B cell (primary cell): ENCODE measurements at regions of chr3 and their contacts with region 1.

Region 1: DNA sequence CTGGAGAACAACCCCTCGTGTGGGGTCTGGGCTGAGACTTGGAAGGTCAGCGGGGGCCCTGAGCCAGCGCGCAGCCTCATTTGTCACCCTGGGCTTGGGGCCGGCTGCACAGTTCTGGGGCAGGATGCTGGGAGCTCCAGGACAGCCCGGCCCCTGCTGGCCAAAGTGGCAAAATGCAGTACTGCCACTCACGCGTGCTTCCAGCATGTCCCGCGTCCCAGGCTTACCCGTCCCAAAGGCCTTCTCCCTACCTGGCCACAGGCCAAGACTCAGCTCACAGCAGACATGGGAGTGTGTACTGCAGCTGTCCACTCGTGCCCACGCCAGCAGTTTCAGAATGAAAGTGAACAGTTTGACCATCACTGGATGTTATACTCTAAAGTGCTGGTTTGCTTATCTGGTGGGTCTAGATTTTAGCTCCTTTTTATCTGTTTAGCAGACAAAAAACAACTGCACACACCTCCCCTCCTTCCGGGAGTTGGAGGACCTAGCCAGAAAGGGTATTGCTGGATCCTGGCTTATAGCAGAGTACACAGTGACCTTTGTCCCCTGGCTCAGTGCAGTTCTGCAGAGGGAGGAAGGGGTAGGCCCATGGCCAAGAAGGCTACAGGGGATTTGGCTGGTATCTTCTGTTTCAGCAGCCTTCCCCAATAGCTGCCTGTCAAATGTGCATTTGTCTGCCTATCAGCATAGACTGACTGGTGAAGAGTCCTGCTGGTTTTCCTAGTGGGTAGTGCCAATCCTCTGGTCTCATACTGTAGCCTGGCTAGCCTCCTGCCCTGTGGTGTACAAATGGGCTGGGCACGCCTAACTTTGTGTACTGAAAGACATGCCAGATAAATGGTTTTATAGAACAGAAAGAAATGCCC is 23.2 kb upstream of the IP6K2 start:
- DNase-seq: peak; percentile 67
- ATAC-seq: peak; percentile 90
- H3K4me3 ChIP-seq: no peak overlapping the region
- H3K4me3 Mint-ChIP-seq: no peak overlapping the region
- H3K27ac ChIP-seq: no peak overlapping the region
- H3K27ac Mint-ChIP-seq: no peak overlapping the region
- H3K4me1 ChIP-seq: peaks cover 0 to 8% of the 10 kb centered on the region in 2 donors
- H3K4me1 Mint-ChIP-seq: peaks cover 13% of the 10 kb centered on the region
- H3K27me3 ChIP-seq: no peaks in the 10 kb centered on the region
- H3K27me3 Mint-ChIP-seq: no peaks in the 10 kb centered on the region
- CTCF ChIP-seq: peak; percentile 77

Region 2: GRCh38 chr3:48446425-48447193 is 293.6 kb before region 1 on chr3 and contains the start of gene ATRIP:
- CTCF ChIA-PET with region 1: no interaction called
- POLR2A ChIA-PET with region 1: no interaction called
- intact Hi-C with region 1: no loop called
- DNase-seq: peak; percentile 89
- ATAC-seq: peak; percentile 99
- H3K4me3 ChIP-seq: peak within 1 kb of the TSS; percentile 50 to 82 (median 73)
- H3K4me3 Mint-ChIP-seq: peak within 1 kb of the TSS; percentile 91
- H3K27ac ChIP-seq: peak within 1 kb of the TSS; percentile 37 to 69
- H3K27ac Mint-ChIP-seq: peak within 1 kb of the TSS; percentile 91
- H3K4me1 ChIP-seq: peaks cover 20 to 27% of the 10 kb centered on the region in 2 donors
- H3K4me1 Mint-ChIP-seq: peaks cover 37% of the 10 kb centered on the region
- H3K27me3 ChIP-seq: no peaks in the 10 kb centered on the region
- H3K27me3 Mint-ChIP-seq: no peaks in the 10 kb centered on the region
- CTCF ChIP-seq: no peak
- total RNA-seq, gene ATRIP: 11.6 and 14.3 TPM in 2 replicates

Region 3: GRCh38 chr3:48952510-48953118 is 212.4 kb after region 1 on chr3:
- CTCF ChIA-PET with region 1: interaction called, 22 read pairs
- POLR2A ChIA-PET with region 1: no interaction called
- intact Hi-C with region 1: no loop called
- DNase-seq: peak; percentile 56
- ATAC-seq: peak; percentile 31
- H3K4me3 ChIP-seq: no peak overlapping the region
- H3K4me3 Mint-ChIP-seq: no peak overlapping the region
- H3K27ac ChIP-seq: no peak overlapping the region
- H3K27ac Mint-ChIP-seq: no peak overlapping the region
- H3K4me1 ChIP-seq: no peaks in the 10 kb centered on the region
- H3K4me1 Mint-ChIP-seq: peaks cover 12% of the 10 kb centered on the region
- H3K27me3 ChIP-seq: no peaks in the 10 kb centered on the region
- H3K27me3 Mint-ChIP-seq: no peaks in the 10 kb centered on the region
- CTCF ChIP-seq: peak; percentile 43

Region 4: DNA sequence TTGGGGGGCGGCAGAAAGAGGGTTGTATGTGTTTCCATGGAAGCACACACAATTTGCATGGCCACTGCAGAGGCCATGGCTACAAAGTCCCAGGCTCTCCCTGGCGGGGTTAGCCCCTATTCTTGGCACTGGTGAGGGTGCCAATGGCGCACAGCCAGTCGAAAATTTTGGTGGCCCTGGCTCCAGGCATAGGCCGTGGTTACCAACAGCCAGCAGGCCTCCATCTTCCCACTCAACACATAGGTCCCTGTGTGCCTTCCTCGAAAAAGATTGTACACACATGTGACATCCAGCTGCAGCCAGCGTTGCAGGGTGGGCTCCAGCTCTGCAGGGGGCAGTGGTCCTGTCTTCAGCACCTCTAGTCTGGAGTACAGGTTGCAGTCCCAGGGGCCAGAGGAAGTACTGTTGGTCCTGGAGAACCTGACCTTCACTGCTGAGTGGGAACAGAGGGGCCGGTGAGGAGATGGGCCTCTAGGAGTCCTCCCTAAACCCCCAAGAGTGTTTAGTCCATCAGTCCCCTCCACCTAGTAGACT is 257.0 kb after region 1 on chr3:
- CTCF ChIA-PET with region 1: no interaction called
- POLR2A ChIA-PET with region 1: no interaction called
- intact Hi-C with region 1: no loop called
- DNase-seq: no peak
- ATAC-seq: no peak
- H3K4me3 ChIP-seq: no peak overlapping the region
- H3K4me3 Mint-ChIP-seq: no peak overlapping the region
- H3K27ac ChIP-seq: no peak overlapping the region
- H3K27ac Mint-ChIP-seq: no peak overlapping the region
- H3K4me1 ChIP-seq: no peaks in the 10 kb centered on the region
- H3K4me1 Mint-ChIP-seq: peaks cover 2% of the 10 kb centered on the region
- H3K27me3 ChIP-seq: no peaks in the 10 kb centered on the region
- H3K27me3 Mint-ChIP-seq: no peaks in the 10 kb centered on the region
- CTCF ChIP-seq: no peak